Sigmoid colon (tissue), 7 donors: ENCODE measurements at regions of chr11 and their contacts with region 1.

Region 1: DNA sequence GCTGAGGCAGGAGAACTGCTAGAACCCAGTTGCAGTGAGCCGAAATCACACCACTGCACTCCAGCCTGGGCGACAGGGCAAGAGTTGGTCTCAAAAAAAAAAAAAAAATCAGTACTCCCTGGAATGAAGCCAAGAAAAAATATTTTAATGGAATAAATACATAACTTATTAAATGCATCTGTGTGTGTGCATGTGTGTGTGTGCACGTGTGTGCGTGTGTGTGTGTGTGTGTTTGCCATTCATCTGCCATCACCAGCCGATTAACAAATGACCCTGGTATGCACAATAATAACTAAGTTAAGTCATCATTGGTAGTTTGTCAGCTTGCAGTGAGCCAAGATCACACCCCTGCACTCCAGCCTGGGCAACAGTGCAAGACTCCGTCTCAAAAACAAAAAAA is 35.0 kb upstream of the SCGB1A1 start:
- DNase-seq: no peak
- H3K4me3 ChIP-seq: no peak overlapping the region
- H3K27ac ChIP-seq: no peak overlapping the region
- H3K4me1 ChIP-seq: peaks cover 0 to 10% (median 3%) of the 10 kb centered on the region in 4 donors
- H3K27me3 ChIP-seq: no peaks in the 10 kb centered on the region
- CTCF ChIP-seq: no peak
- EP300 ChIP-seq: no peak
- POLR2A ChIP-seq: no peak

Region 2: DNA sequence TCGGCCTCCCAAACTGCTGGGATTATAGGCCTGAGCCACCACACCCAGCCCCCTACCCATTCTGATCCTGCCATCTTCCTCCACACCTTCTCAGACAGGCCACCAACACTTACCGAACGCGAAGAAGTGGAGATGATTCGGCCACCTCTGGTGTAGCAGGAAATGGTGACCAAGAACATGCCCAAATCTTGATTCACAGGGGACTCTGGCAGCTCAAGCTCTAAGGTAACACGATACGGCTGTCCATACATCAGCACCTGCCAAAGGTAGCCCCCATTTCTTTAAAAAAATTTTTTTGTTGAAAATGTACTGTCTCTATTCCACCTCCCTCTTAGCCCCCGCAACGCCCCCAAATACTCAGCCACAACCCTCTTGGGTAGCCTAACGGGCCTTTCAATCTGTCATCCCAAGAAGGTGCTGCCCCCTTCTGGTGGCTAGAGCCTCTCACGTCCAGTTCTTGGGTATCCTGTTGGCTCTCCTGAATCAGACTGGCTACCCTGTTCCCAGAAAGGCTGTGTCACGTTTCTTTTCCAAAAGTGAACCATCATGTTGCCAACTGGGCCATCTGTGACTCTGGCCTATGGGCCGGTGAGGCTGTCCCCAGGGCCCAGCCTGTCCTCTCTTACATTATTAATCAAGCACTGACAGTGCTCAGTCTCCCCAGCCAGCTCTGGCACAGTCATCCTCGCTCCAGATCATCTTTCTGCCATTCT is 310.8 kb after region 1 on chr11:
- intact Hi-C with region 1: loop called (anchors 2 kb)
- DNase-seq: peak; percentile 91
- H3K4me3 ChIP-seq: no peak overlapping the region
- H3K27ac ChIP-seq: peak overlapping the region in 1 of 4 donors; percentile 15
- H3K4me1 ChIP-seq: peaks cover 0 to 18% (median 14%) of the 10 kb centered on the region in 4 donors
- H3K27me3 ChIP-seq: no peaks in the 10 kb centered on the region
- CTCF ChIP-seq: peak; percentile 39 to 80 (median 60)
- EP300 ChIP-seq: no peak
- POLR2A ChIP-seq: no peak